Activated naive CD4-positive, alpha-beta T cell treated with anti-CD3 and anti-CD28 coated beads for 36 hours (primary cell): ENCODE measurements at regions of chr14 and their contacts with region 1.

Region 1: GRCh38 chr14:58637391-58638230 is at the start of gene DACT1:
- DNase-seq: peak; percentile 68
- H3K4me3 Mint-ChIP-seq: peak within 1 kb of the TSS; percentile 91
- H3K27ac Mint-ChIP-seq: peak within 1 kb of the TSS; percentile 90
- H3K4me1 Mint-ChIP-seq: peaks cover 48% of the 10 kb centered on the region
- H3K27me3 Mint-ChIP-seq: peaks cover 5% of the 10 kb centered on the region
- total RNA-seq, gene DACT1: 4.0 to 5.2 TPM

Region 2: GRCh38 chr14:58107947-58108552 is 529.6 kb before region 1 on chr14:
- CTCF ChIA-PET with region 1: no interaction called
- intact Hi-C with region 1: loop called (anchors 2 kb)
- DNase-seq: peak; percentile 65
- H3K4me3 Mint-ChIP-seq: no peak overlapping the region
- H3K27ac Mint-ChIP-seq: no peak overlapping the region
- H3K4me1 Mint-ChIP-seq: peaks cover 5% of the 10 kb centered on the region
- H3K27me3 Mint-ChIP-seq: peaks cover 7% of the 10 kb centered on the region

Region 3: GRCh38 chr14:58501214-58501816 is 136.3 kb before region 1 on chr14:
- CTCF ChIA-PET with region 1: interaction called, 46 read pairs
- intact Hi-C with region 1: loop called (anchors 1 kb)
- DNase-seq: peak; percentile 52
- H3K4me3 Mint-ChIP-seq: no peak overlapping the region
- H3K27ac Mint-ChIP-seq: no peak overlapping the region
- H3K4me1 Mint-ChIP-seq: no peaks in the 10 kb centered on the region
- H3K27me3 Mint-ChIP-seq: no peaks in the 10 kb centered on the region

Region 4: DNA sequence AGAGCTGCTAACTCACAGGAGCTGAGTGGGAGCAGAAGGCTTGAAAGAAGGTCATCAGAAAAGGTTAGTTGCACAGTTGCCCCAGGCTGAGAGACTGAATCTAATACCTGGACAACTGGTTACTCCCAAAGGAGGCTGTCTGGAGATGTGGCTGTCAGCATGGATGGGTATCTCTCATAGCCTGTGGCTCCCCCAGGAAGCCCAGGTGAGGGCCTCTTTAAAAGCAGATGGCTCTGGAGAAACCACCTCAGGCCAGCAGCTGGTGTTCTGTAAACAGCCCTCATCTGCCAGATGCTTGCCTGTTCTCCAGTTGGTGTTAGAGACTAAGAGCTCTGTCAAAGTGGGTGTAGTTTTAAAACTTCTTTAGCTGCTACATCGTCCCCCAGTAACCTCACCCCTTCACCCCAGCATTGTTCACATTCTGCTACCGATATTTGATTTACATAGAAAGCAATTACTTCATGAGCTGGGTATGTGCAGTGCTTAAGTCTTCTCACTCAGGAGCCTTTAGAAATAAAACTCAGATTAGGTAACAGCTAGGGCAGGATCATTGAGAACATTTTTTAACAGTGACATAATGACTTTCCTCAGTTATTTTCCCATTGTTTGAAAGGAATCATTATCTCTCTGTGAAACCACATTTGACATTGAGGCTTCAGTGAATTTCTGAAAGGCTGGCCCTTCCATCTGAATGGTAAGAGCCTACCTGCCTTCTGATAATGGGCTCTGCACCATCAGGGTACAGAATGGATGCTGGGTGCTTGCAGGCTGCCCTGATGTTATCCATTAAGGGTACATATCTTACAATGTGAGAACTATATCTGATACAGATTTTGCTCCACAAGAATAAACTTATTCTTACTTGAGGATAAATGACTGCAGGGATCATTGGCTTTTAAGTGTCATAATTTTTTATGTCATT is 26.1 kb after region 1 on chr14:
- CTCF ChIA-PET with region 1: interaction called, 11 read pairs
- intact Hi-C with region 1: no loop called
- DNase-seq: no peak
- H3K4me3 Mint-ChIP-seq: no peak overlapping the region
- H3K27ac Mint-ChIP-seq: no peak overlapping the region
- H3K4me1 Mint-ChIP-seq: peaks cover 31% of the 10 kb centered on the region
- H3K27me3 Mint-ChIP-seq: no peaks in the 10 kb centered on the region

Region 5: GRCh38 chr14:59020382-59020781 is 382.8 kb after region 1 on chr14:
- CTCF ChIA-PET with region 1: interaction called, 5 read pairs
- intact Hi-C with region 1: loop called (anchors 2 kb)
- DNase-seq: no peak
- H3K4me3 Mint-ChIP-seq: no peak overlapping the region
- H3K27ac Mint-ChIP-seq: no peak overlapping the region
- H3K4me1 Mint-ChIP-seq: no peaks in the 10 kb centered on the region
- H3K27me3 Mint-ChIP-seq: no peaks in the 10 kb centered on the region

Region 6: GRCh38 chr14:59438195-59438647 is 800.6 kb after region 1 on chr14:
- CTCF ChIA-PET with region 1: no interaction called
- intact Hi-C with region 1: loop called (anchors 5 kb)
- DNase-seq: no peak
- H3K4me3 Mint-ChIP-seq: no peak overlapping the region
- H3K27ac Mint-ChIP-seq: no peak overlapping the region
- H3K4me1 Mint-ChIP-seq: no peaks in the 10 kb centered on the region
- H3K27me3 Mint-ChIP-seq: peaks cover 3% of the 10 kb centered on the region